GM13977 (cell line): ENCODE measurements at regions of chr5 and their contacts with region 1.

Region 1: DNA sequence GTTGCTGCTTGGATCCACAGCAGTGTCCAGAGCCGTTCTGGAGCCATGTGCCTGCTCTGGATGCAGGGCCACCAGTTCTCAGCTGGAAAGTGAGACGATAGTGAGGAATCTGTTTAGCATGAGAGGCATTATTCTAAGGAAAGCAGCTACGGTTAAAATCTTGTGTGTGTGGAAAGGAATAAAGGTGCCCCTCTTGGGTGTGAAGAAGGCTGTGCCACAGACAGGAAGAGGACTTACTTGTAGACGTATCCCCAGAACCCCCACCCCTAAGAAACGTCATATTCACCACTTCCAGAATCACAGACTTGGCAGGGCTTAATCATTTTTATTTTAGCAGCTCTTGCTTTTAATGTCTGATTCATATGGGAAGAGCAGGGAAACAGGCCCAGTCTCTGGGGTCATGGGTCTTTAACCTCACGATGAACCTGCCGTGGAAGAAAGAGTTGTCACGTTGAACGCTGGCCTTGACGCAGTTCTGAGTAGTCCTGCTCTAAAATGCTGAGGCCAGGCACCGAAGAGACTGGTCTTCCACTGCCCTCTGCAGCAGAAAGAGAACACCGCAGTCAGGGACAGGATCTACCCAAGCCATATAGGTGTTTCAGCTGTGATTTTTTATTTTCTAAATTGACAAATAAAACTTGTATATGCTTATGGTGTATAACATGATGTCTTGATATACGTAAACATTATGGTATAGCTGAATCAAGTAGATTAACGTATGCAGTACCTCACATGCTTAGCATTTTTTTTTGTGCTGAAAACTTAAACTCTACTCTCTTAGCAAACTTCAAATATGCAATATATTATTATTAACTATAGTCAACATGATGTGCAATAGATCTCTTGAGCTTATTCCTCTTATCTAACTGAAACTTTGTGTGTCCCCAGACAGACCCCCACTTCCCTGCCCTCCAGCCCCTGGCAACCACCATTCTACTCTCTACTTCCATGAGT is 38.8 kb downstream of the CARTPT start:
- DNase-seq: peak; percentile 50
- CTCF ChIP-seq: peak; percentile 84

Region 2: GRCh38 chr5:71522151-71522550 is 235.7 kb before region 1 on chr5:
- in situ Hi-C with region 1: loop called (anchors 25 kb)
- DNase-seq: no peak
- CTCF ChIP-seq: no peak

Region 3: GRCh38 chr5:71658916-71659662 is 98.8 kb before region 1 on chr5:
- in situ Hi-C with region 1: loop called (anchors 10 kb)
- DNase-seq: peak; percentile 23
- CTCF ChIP-seq: no peak

Region 4: DNA sequence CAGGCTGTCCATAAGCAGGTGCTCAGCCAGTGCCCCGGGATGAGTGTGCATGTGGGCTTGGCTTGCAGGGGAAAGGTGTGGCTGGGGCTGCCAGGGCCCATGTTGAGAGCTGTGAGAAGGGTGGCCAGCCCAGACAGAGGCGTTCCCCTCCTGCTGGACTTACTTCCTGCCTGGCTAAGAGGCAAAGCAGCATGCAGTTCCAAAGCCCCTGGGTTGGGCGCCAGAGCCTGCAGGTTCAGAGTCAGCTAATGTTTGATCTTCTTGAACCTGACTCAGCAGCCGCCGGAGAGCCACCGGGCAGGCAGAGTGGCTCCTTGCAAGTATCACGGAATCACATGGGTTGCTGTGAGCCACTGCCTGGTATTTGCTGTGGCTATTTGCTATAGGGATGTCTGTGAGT is 181.0 kb after region 1 on chr5:
- in situ Hi-C with region 1: no loop called
- DNase-seq: no peak
- CTCF ChIP-seq: no peak

Region 5: DNA sequence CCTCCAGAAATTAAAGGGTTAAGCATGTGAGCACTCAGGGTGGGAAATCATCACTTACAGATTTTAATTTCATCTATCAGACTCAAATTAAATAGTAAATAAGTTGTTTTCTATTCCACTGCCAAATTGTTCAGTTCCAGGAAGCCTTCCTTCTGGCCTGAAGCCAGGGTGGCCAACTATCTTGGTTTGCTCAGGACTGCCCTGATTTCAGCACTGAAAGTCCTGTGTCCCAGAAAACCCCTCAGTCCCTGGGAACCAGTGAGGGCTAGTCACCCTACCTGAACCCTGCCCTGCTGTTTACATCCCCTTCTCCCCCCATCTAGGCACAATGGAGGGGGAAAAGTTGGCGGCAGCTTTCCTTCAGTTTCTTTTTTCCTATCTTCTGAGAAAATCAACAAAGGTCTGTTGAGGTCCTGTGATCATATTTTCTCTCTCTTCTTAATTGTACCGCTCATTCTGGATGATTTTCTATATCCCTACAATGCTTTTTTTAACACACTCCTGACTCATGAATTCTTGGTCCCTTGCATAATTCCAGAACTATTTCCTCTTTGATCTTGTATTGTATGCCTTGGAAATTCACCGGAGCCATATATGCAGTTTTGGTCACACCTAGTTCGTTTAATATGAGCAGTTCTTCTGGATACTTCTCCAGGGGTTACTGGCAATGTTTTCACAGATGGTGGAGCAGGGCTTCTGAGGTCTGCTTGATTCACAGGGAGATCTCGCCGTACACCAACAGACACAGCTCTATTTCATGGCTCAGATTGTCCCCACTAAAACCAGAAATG is 453.2 kb after region 1 on chr5:
- in situ Hi-C with region 1: no loop called
- DNase-seq: no peak
- CTCF ChIP-seq: no peak